ENCODE measurements at regions of chr6 and their contacts with region 1.

Region 1: DNA sequence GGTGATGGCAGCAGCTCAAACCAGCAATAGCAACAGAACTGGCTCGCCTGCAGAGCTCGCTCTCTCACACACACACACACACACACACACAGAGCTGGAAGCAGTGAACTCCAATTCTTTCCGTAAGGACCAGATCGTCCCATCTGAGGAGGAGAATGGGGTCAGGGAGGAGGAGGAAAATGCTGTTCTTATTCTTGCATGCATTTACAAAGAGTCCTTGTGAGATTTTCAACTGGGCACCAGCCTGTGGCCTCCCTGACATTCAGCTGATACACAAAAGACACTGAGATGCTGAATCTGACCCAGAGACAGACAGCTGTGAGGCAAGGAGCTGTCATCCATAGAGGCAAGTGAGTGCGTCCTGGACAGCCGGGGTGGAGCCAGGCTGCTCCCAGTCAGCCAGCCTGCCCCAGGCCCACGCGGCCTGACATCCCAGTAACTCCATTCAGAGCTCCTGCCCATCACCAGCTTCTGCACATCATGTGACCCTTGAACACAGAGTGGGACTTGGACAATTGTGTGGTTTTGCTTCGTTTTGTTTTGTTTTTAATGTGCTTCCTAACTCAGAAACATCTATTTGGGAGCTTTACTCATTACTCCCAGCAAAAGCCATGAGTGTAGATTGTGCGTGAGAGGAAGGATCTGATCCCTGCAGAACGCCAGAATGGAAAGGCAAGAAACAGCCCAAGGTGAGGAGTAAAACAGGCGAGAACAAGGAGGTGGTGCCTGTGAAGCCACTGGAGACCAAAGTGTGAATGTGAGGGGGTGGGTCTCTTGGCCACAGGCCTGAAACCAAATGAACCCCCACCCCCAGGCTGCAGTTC is 2.1 kb downstream of the SERPINB9 start:
- DNase-seq: no peak
- ATAC-seq: no peak
- H3K4me3 Mint-ChIP-seq: peak overlapping the region; percentile 98
- H3K27ac Mint-ChIP-seq: peak overlapping the region; percentile 93
- H3K4me1 Mint-ChIP-seq: peaks cover 61% of the 10 kb centered on the region
- H3K27me3 Mint-ChIP-seq: no peaks in the 10 kb centered on the region
- CTCF ChIP-seq: no peak

Region 2: DNA sequence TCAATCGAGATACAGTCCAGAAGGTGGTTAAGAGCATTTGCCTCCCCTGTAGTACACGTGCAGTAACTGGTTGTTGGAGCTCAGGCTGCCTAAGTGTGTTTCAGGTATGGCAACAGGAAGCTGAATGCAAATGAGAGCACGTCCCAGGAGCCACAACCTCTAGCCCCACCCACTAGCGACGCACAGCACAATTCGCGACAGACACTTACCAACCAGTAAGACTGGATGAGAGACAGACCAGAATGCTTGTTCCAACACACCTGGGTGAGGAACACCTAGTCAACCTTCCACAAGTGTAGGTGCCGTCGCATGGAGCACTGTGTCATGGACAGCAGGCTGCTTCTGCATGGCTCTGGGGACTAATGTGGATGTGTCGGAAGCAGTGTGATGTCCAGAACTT is 52.2 kb before region 1 on chr6:
- CTCF ChIA-PET with region 1: interaction called, 30 read pairs
- POLR2A ChIA-PET with region 1: interaction called, 139 read pairs
- intact Hi-C with region 1: loop called (anchors 1 kb)
- DNase-seq: no peak
- ATAC-seq: peak; percentile 65
- H3K4me3 Mint-ChIP-seq: peak overlapping the region; percentile 33
- H3K27ac Mint-ChIP-seq: peak overlapping the region; percentile 83
- H3K4me1 Mint-ChIP-seq: peaks cover 59% of the 10 kb centered on the region
- H3K27me3 Mint-ChIP-seq: no peaks in the 10 kb centered on the region
- CTCF ChIP-seq: no peak

Region 3: GRCh38 chr6:2862712-2863181 is 38.3 kb before region 1 on chr6:
- CTCF ChIA-PET with region 1: interaction called, 5 read pairs
- POLR2A ChIA-PET with region 1: interaction called, 139 read pairs
- intact Hi-C with region 1: loop called (anchors 2 kb)
- DNase-seq: no peak
- ATAC-seq: peak; percentile 56
- H3K4me3 Mint-ChIP-seq: peak overlapping the region; percentile 56
- H3K27ac Mint-ChIP-seq: peak overlapping the region; percentile 92
- H3K4me1 Mint-ChIP-seq: peaks cover 91% of the 10 kb centered on the region
- H3K27me3 Mint-ChIP-seq: no peaks in the 10 kb centered on the region
- CTCF ChIP-seq: no peak

Region 4: GRCh38 chr6:2885967-2886735 is 14.9 kb before region 1 on chr6:
- CTCF ChIA-PET with region 1: interaction called, 3 read pairs
- POLR2A ChIA-PET with region 1: interaction called, 31 read pairs
- intact Hi-C with region 1: loop called (anchors 1 kb)
- DNase-seq: no peak
- ATAC-seq: peak; percentile 41
- H3K4me3 Mint-ChIP-seq: peak overlapping the region; percentile 42
- H3K27ac Mint-ChIP-seq: peak overlapping the region; percentile 92
- H3K4me1 Mint-ChIP-seq: peaks cover 83% of the 10 kb centered on the region
- H3K27me3 Mint-ChIP-seq: no peaks in the 10 kb centered on the region
- CTCF ChIP-seq: no peak

Region 5: DNA sequence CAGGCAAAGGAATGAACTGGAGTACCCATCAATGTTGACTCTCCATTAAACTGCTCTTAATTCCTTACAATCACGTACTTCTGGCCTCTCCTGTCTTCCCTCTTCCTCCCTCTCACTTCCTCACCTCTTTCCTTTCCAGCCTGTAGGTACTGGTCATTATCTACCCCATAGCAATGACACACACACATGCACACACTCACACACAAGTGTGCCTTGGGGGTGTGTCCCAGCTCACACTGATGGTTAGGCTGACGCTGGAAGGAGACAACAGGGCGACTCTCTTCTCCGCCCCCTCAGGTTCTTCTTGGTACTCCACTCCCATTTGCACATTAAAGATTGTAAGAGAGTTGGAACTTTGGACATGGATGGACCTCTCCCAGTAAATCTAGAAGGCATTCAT is 16.0 kb after region 1 on chr6:
- CTCF ChIA-PET with region 1: interaction called, 7 read pairs
- POLR2A ChIA-PET with region 1: interaction called, 36 read pairs
- intact Hi-C with region 1: no loop called
- DNase-seq: no peak
- ATAC-seq: peak; percentile 68
- H3K4me3 Mint-ChIP-seq: no peak overlapping the region
- H3K27ac Mint-ChIP-seq: no peak overlapping the region
- H3K4me1 Mint-ChIP-seq: no peaks in the 10 kb centered on the region
- H3K27me3 Mint-ChIP-seq: no peaks in the 10 kb centered on the region
- CTCF ChIP-seq: no peak

Region 6: DNA sequence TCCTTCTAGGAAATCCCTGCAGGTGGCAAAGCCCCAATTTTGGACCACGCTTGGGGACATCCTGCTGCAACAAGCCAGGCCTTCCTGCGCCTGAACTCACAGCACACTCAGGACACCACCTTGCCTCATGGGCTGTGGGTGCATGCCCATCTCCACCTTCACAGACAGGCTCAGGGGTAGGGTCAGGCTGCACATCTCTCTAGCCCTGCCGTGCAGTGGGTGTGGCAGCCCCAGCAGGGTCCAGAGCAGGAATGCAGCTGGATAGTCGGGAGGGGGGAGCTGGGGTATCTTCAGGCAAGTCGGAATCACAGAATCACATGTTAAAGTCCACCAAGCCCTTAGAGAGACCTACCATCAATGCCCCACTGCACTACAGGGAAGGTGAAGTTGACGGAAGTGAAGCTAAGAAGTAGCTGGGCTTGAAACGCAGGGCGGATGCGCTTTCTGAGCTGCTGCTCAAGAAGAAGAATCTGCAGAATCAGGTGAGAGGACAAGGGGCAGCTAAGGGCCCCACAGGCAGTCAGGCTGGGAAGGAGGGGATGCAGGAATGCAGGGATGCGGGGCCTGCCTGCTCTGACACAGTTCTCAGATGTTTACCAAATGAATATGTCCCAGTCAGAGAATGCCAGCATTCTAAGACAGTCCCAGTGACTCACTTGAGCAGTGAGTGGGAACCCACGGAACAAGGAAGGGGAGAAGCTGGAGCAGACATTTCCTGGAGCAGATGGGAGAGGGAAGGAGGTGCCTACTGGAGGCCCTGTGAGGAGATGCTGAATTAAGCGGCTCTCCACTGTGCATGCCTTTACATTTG is 59.1 kb after region 1 on chr6:
- CTCF ChIA-PET with region 1: no interaction called
- POLR2A ChIA-PET with region 1: no interaction called
- intact Hi-C with region 1: no loop called
- DNase-seq: no peak
- ATAC-seq: no peak
- H3K4me3 Mint-ChIP-seq: no peak overlapping the region
- H3K27ac Mint-ChIP-seq: no peak overlapping the region
- H3K4me1 Mint-ChIP-seq: peaks cover 24% of the 10 kb centered on the region
- H3K27me3 Mint-ChIP-seq: no peaks in the 10 kb centered on the region
- CTCF ChIP-seq: no peak

Region 7: DNA sequence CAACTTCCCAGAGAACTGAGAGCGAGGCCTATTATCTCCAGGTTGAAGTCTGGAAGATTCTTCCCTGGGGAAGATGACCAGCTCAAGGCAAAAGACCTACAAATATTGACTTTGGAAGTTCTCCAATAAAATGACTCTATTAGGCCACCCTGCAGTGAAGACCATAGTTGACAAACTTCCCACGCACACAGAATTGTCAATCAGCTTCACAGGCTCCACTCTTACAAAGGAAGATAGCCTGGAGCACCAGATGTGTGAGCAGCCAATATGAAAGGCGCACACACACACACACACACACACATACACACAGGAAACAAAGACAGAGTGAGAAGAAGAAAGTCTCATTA is 1061.9 kb after region 1 on chr6:
- CTCF ChIA-PET with region 1: no interaction called
- POLR2A ChIA-PET with region 1: no interaction called
- intact Hi-C with region 1: no loop called
- DNase-seq: no peak
- ATAC-seq: no peak
- H3K4me3 Mint-ChIP-seq: no peak overlapping the region
- H3K27ac Mint-ChIP-seq: no peak overlapping the region
- H3K4me1 Mint-ChIP-seq: no peaks in the 10 kb centered on the region
- H3K27me3 Mint-ChIP-seq: peaks cover 3% of the 10 kb centered on the region
- CTCF ChIP-seq: no peak